Ascending aorta (tissue), 2 donors: ENCODE measurements at regions of chr11 and their contacts with region 1.

Region 1: GRCh38 chr11:115504276-115505158 is at the start of gene CADM1:
- DNase-seq: peak; percentile 83 to 96
- H3K4me3 ChIP-seq: peak within 1 kb of the TSS; percentile 55 to 80
- H3K27ac ChIP-seq: peak within 1 kb of the TSS; percentile 65 to 73
- H3K4me1 ChIP-seq: peaks cover 10 to 18% of the 10 kb centered on the region in 2 donors
- H3K27me3 ChIP-seq: no peaks in the 10 kb centered on the region
- CTCF ChIP-seq: peak; percentile 43 to 57 (median 49)
- total RNA-seq, gene CADM1: 2.4 TPM

Region 2: GRCh38 chr11:113773416-113774173 is 1730.9 kb before region 1 on chr11 and contains the start of gene ZW10:
- intact Hi-C with region 1: loop called (anchors 5 kb)
- DNase-seq: peak; percentile 82 to 98
- H3K4me3 ChIP-seq: peak within 1 kb of the TSS; percentile 89 to 96
- H3K27ac ChIP-seq: peak within 1 kb of the TSS; percentile 84 to 85
- H3K4me1 ChIP-seq: peaks cover 0 to 15% of the 10 kb centered on the region in 2 donors
- H3K27me3 ChIP-seq: no peaks in the 10 kb centered on the region
- CTCF ChIP-seq: peak; percentile 55 to 86 (median 82)
- total RNA-seq, gene ZW10: 12.3 TPM

Region 3: GRCh38 chr11:113875234-113876073 is 1629.1 kb before region 1 on chr11 and contains the start of gene USP28:
- intact Hi-C with region 1: loop called (anchors 10 kb)
- DNase-seq: peak; percentile 92 to 98
- H3K4me3 ChIP-seq: peak within 1 kb of the TSS; percentile 87 to 100
- H3K27ac ChIP-seq: peak within 1 kb of the TSS; percentile 90
- H3K4me1 ChIP-seq: peaks cover 0 to 18% of the 10 kb centered on the region in 2 donors
- H3K27me3 ChIP-seq: no peaks in the 10 kb centered on the region
- CTCF ChIP-seq: peak in 1 of 3 experiments; percentile 25
- total RNA-seq, gene USP28: 2.9 TPM

Region 4: DNA sequence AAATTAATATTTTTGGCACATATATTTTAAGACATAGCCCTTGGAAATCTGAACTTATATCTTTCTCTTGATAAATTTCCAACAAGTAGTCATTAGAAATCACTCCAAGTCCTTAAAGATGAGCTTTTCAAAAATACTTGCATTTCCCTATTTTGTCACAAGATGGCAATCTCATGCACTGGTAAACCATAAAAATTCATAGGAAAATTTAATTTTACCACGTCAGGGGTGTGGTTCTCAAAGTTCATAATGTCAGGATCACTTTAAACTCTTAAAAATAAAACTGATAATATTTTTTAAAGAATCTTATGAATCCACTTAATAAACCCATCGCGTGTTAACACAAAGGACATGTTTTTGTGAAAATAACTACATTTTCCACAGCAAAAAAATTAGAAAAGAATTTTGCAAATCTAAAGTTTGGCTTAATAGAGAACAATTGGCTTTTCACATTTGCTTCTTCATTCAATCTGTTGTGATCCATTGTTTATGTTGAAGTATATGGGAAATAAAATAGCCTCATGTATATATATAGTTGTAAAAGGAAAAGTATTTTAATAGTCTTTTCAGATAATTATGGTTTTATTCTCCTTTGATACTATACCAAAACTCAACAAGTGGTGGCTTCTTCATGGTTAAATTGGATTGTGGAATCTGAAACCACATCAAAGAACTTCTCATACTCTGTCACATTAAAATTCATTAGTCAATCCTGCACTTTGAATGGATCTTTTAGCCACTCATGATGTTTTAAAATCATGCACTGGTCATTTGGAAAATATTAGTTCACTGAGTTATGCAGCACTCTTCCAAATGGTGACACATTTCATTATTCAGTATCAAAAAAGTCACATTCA is 169.4 kb before region 1 on chr11:
- intact Hi-C with region 1: loop called (anchors 10 kb)
- DNase-seq: no peak
- H3K4me3 ChIP-seq: no peak overlapping the region
- H3K27ac ChIP-seq: no peak overlapping the region
- H3K4me1 ChIP-seq: no peaks in the 10 kb centered on the region
- H3K27me3 ChIP-seq: no peaks in the 10 kb centered on the region
- CTCF ChIP-seq: peak; percentile 5 to 69 (median 66)

Region 5: DNA sequence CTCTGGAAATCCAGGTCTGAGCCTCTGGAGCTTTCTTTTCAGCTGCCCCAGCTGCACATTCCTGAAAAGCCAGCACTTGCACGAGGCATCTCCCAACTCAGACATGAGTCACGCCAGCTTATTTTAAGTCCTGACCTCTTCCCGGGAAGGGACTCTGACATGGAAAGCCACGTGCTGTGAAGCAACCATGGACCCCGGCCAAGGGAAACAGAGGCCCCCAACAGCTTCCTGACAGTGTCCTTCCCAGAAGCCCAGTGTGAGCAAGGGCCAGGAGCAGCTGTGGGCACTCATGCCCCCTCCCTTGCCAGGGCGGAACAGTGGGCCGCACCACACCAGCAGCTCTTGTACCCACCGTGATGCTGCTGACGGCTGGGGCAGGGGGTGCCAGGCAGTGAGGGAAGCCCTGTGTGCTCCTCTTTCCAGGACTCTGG is 118.5 kb after region 1 on chr11:
- intact Hi-C with region 1: loop called (anchors 5 kb)
- DNase-seq: peak; percentile 56 to 87
- H3K4me3 ChIP-seq: no peak overlapping the region
- H3K27ac ChIP-seq: peak overlapping the region; percentile 55 to 66
- H3K4me1 ChIP-seq: peaks cover 0 to 13% of the 10 kb centered on the region in 2 donors
- H3K27me3 ChIP-seq: no peaks in the 10 kb centered on the region
- CTCF ChIP-seq: no peak

Region 6: GRCh38 chr11:115699733-115700132 is 195.2 kb after region 1 on chr11:
- intact Hi-C with region 1: loop called (anchors 1 kb)
- DNase-seq: no peak
- H3K4me3 ChIP-seq: no peak overlapping the region
- H3K27ac ChIP-seq: peak overlapping the region; percentile 60 to 65
- H3K4me1 ChIP-seq: peaks cover 3 to 14% of the 10 kb centered on the region in 2 donors
- H3K27me3 ChIP-seq: no peaks in the 10 kb centered on the region
- CTCF ChIP-seq: no peak

Region 7: GRCh38 chr11:115716601-115717529 is 212.3 kb after region 1 on chr11:
- intact Hi-C with region 1: no loop called
- DNase-seq: no peak
- H3K4me3 ChIP-seq: no peak overlapping the region
- H3K27ac ChIP-seq: no peak overlapping the region
- H3K4me1 ChIP-seq: no peaks in the 10 kb centered on the region
- H3K27me3 ChIP-seq: no peaks in the 10 kb centered on the region
- CTCF ChIP-seq: no peak